CD4-positive, alpha-beta memory T cell (primary cell): ENCODE measurements at regions of chr16 and their contacts with region 1.

Region 1: GRCh38 chr16:2047330-2048115 is at the starts of genes NTHL1 and TSC2:
- DNase-seq: peak; percentile 88 to 91 (median 89)
- H3K4me3 ChIP-seq: peak within 1 kb of the TSS; percentile 81 to 82
- H3K4me3 Mint-ChIP-seq: peak within 1 kb of the TSS; percentile 91 to 96 (median 93)
- H3K27ac ChIP-seq: peak within 1 kb of the TSS; percentile 73
- H3K27ac Mint-ChIP-seq: peak within 1 kb of the TSS; percentile 42 to 91 (median 85)
- H3K4me1 ChIP-seq: peaks cover 24% of the 10 kb centered on the region
- H3K4me1 Mint-ChIP-seq: peaks cover 11 to 27% (median 17%) of the 10 kb centered on the region in 4 donors
- H3K27me3 ChIP-seq: no peaks in the 10 kb centered on the region
- H3K27me3 Mint-ChIP-seq: no peaks in the 10 kb centered on the region
- total RNA-seq, gene NTHL1: 9.3 to 12.0 TPM
- total RNA-seq, gene TSC2: 157 to 177 TPM

Region 2: GRCh38 chr16:1991948-1992703 is 55.4 kb before region 1 on chr16:
- CTCF ChIA-PET with region 1: no interaction called
- POLR2A ChIA-PET with region 1: no interaction called
- intact Hi-C with region 1: no loop called
- DNase-seq: peak; percentile 92 to 99 (median 93)
- H3K4me3 ChIP-seq: peak overlapping the region in 1 of 2 donors; percentile 42
- H3K4me3 Mint-ChIP-seq: peak overlapping the region in 7 of 8 donors; percentile 40 to 84 (median 73)
- H3K27ac ChIP-seq: peak overlapping the region; percentile 61
- H3K27ac Mint-ChIP-seq: peak overlapping the region in 6 of 7 donors; percentile 62 to 88 (median 78)
- H3K4me1 ChIP-seq: peaks cover 22% of the 10 kb centered on the region
- H3K4me1 Mint-ChIP-seq: peaks cover 6 to 30% (median 16%) of the 10 kb centered on the region in 4 donors
- H3K27me3 ChIP-seq: no peaks in the 10 kb centered on the region
- H3K27me3 Mint-ChIP-seq: peaks cover 6 to 7% of the 10 kb centered on the region in 2 donors

Region 3: DNA sequence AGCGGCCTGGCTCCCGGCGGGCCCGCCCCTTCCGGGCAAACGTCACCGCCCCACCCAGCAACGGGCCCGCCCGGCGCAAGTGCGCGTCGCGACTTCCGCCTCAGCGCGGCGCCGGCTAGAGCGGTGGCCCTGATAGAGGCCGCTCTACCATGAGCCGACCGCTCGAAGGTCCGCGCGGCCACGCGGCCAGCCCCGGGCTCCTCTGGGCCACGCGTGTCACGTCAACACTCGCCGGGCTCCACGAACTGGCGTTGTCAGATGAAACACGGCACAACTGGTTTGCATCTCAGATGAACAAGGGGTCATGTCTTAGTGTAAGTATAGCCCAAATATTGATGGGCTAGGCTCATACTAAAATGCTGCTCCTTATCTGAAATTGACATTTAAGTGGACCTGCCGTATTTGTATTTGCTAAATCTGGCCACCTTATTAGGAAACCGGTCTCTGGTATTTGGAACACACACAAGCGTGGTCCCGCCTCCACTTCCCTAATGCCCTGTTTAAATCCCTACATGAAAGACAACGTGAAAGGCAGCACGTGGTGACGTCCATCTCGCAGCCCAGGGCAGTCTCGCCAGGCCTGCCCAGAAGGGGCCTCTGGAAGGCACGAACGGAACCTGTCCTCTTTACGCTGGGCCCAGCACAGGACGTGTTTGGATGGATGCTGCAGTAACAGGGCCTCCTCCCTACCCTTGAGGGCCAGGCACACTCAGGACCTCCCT is 37.6 kb before region 1 on chr16 and contains the start of gene ZNF598:
- CTCF ChIA-PET with region 1: no interaction called
- POLR2A ChIA-PET with region 1: interaction called, 5 read pairs
- intact Hi-C with region 1: loop called (anchors 5 kb)
- DNase-seq: peak; percentile 76 to 82 (median 80)
- H3K4me3 ChIP-seq: peak within 1 kb of the TSS; percentile 62 to 91
- H3K4me3 Mint-ChIP-seq: peak within 1 kb of the TSS; percentile 88 to 95 (median 92)
- H3K27ac ChIP-seq: peak within 1 kb of the TSS; percentile 93
- H3K27ac Mint-ChIP-seq: peak within 1 kb of the TSS; percentile 92 to 98 (median 98)
- H3K4me1 ChIP-seq: peaks cover 39% of the 10 kb centered on the region
- H3K4me1 Mint-ChIP-seq: peaks cover 23 to 44% (median 33%) of the 10 kb centered on the region in 4 donors
- H3K27me3 ChIP-seq: no peaks in the 10 kb centered on the region
- H3K27me3 Mint-ChIP-seq: no peaks in the 10 kb centered on the region
- total RNA-seq, gene ZNF598: 48.5 to 49.8 TPM

Region 4: DNA sequence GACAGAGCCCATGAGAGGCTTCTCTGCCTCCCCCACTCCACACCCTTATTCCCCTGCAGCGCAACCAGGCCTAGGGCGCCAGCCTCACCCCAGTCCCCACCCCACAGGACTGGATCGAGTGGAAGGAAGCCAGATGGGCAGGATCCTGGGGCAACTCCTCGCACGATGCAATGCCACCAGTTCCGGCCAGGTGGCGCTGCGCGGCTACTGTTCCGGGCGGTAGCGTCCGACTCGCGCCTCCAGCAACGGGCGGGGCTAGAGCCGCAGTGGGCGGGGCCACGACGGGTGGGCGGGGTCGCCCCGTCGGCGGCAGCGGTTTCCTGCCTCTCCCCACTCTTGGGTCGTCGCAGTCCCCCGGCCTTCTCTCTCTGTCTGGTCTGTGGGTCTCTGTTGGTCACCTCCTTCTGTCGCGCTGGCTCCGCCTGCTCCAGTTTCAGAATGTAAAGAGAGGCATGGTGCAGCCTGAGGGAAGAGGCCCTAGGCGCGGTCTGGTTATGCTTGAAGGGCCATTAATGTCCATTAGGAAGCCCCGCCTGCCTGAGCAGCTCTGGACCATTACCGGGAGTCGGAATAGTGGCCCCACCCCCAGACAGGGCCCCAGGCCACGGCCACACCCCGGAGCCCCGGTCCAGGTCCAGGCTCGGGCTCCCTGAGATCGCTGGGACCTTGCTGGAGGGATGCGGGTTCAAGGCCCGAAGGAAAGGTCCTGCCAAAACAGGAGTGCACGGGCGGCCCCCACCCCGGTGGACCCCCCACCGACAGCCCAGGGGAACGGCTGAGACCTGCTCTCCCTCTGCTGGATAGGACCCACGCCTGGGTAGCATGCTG is 24.2 kb before region 1 on chr16:
- CTCF ChIA-PET with region 1: interaction called, 5 read pairs
- POLR2A ChIA-PET with region 1: interaction called, 8 read pairs
- intact Hi-C with region 1: loop called (anchors 2 kb)
- DNase-seq: peak; percentile 89 to 95 (median 91)
- H3K4me3 ChIP-seq: peak overlapping the region in 1 of 2 donors; percentile 30
- H3K4me3 Mint-ChIP-seq: peak overlapping the region; percentile 6 to 76 (median 70)
- H3K27ac ChIP-seq: peak overlapping the region; percentile 44
- H3K27ac Mint-ChIP-seq: peak overlapping the region in 6 of 7 donors; percentile 60 to 91 (median 76)
- H3K4me1 ChIP-seq: peaks cover 29% of the 10 kb centered on the region
- H3K4me1 Mint-ChIP-seq: peaks cover 9 to 26% (median 17%) of the 10 kb centered on the region in 4 donors
- H3K27me3 ChIP-seq: peaks cover 12% of the 10 kb centered on the region
- H3K27me3 Mint-ChIP-seq: peaks cover 15 to 16% of the 10 kb centered on the region in 2 donors

Region 5: DNA sequence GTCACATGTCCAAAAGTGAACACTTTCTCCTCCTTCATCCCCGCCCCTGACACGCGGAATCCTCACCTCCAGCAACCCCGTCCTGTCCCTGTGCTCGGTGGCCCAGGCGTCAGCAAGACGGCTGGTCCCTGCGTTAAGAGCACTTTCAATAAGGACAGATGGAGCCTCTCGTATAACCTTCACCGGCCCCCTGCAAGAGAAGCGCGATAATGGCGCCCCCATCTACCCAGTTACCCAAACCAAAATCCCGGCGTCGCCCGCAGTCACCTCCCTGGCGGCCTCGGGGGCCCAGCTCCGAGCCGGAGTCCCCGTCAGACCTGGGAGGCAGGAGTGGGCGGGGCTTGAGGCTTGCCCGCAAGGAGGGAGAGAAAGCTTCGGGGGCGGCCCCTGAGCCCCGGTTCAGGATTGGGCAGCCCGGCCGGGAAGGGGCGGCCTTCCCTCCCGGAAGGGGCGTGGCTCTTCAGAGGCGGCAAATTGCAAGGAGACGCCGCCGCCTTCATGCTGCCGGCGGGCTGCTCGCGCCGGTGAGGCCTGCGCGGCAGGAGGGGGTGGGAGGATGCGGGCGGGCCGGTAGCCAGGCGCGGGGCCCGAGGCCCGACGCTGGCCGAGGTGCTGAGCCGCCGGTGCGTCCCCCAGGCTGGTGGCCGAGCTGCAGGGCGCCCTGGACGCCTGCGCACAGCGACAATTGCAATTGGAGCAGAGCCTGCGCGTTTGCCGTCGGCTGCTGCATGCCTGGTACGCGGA is 412.3 kb after region 1 on chr16 and contains the start of gene TEDC2:
- CTCF ChIA-PET with region 1: no interaction called
- POLR2A ChIA-PET with region 1: no interaction called
- intact Hi-C with region 1: loop called (anchors 1 kb)
- DNase-seq: peak; percentile 94 to 97 (median 96)
- H3K4me3 ChIP-seq: peak within 1 kb of the TSS; percentile 42 to 56
- H3K4me3 Mint-ChIP-seq: peak within 1 kb of the TSS; percentile 86 to 93 (median 88)
- H3K27ac ChIP-seq: peak within 1 kb of the TSS; percentile 53
- H3K27ac Mint-ChIP-seq: peak within 1 kb of the TSS; percentile 38 to 90 (median 80)
- H3K4me1 ChIP-seq: peaks cover 14% of the 10 kb centered on the region
- H3K4me1 Mint-ChIP-seq: peaks cover 5 to 8% (median 6%) of the 10 kb centered on the region in 4 donors
- H3K27me3 ChIP-seq: no peaks in the 10 kb centered on the region
- H3K27me3 Mint-ChIP-seq: no peaks in the 10 kb centered on the region
- total RNA-seq, gene TEDC2: 0.44 to 0.55 TPM